ENCODE measurements at regions of chr9 and their contacts with region 1.

Region 1: DNA sequence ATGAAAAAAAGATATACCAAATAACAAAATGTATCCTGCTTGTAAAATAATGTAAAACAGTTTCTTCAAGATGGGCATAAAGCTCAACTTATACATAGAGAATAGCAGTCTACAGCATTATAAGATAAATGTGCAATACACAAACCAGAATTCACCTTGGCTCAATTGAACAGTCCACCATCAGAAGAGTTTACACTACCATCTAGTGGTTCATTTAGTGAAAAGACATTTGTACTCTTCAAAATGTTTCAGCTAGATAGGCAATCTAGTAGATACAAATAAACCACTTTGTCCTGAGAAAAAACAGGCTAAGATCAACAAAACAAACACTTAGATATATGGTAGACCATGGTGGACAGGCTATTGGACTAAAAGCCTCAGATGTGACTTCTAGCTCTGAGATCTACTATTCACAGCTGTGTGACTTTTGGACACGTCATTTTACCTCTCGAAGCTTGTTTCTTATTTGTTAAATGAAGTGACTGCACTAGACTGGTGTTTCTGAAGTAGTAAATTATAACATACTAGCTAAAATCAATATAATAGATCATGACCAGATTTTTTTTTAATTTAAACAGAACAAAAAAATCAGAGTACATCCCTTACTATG is 22.1 kb upstream of the TPD52L3 start:
- DNase-seq: no peak
- ATAC-seq: peak; percentile 73

Region 2: DNA sequence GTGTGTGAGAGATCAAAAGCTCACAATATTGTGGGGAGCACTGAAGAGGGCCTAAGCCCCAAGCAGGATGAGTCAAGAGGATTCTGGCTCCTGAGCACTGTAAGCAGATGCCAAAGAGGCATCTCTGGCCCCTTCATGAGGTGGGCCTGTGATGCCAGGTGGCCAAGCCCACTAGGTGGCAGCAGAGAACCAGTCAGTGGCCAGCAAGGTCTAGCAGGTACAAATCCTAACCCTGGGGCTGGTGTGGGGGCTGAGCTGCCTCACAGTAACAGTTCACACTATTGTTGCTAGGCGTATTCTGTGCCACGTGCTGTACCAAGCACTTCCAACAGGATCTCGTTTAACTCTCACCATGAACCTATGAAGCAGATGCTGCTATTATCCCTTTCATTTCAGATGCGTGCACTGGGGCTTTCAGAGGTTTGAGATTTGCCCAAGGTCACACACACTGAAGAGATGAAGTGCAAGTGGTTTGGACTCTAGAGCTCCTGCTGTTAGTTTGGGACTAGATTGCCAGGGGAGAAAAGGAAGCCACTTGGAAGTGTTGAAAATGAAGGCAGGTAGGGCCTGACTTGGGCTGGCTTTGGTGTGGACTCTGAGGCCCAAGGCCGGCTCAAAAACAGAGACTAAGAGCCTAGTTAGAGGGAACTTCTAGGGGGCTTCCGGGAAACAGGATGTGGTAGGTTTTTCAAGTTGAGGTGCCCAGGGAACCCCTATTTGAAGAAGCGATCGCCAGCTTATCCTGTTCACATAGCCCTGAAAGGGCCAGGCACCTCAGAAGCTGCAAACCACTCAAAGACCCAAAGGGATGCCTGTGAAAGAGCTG is 419.7 kb before region 1 on chr9:
- intact Hi-C with region 1: loop called (anchors 5 kb)
- DNase-seq: peak; percentile 80
- ATAC-seq: peak; percentile 86

Region 3: GRCh38 chr9:6055213-6055612 is 250.8 kb before region 1 on chr9:
- intact Hi-C with region 1: loop called (anchors 2 kb)
- DNase-seq: no peak
- ATAC-seq: peak; percentile 93

Region 4: GRCh38 chr9:6197330-6197729 is 108.7 kb before region 1 on chr9:
- intact Hi-C with region 1: loop called (anchors 5 kb)
- DNase-seq: no peak
- ATAC-seq: peak; percentile 43